ENCODE measurements at regions of chr9 and their contacts with region 1.

Region 1: GRCh38 chr9:111298731-111299598 is 31.1 kb downstream of the OR2K2 start:
- DNase-seq: peak; percentile 37
- ATAC-seq: peak; percentile 87
- H3K4me3 ChIP-seq: no peak overlapping the region
- H3K27ac ChIP-seq: no peak overlapping the region
- H3K4me1 ChIP-seq: no peaks in the 10 kb centered on the region
- H3K27me3 ChIP-seq: no peaks in the 10 kb centered on the region
- CTCF ChIP-seq: peak; percentile 56 to 87 (median 65)
- EP300 ChIP-seq: no peak
- POLR2A ChIP-seq: no peak
- RAD21 ChIP-seq: peak; percentile 99

Region 2: GRCh38 chr9:110427497-110428104 is 871.4 kb before region 1 on chr9:
- CTCF ChIA-PET with region 1: interaction called, 3 read pairs
- POLR2A ChIA-PET with region 1: no interaction called
- RAD21 ChIA-PET with region 1: no interaction called
- SMC1A ChIA-PET with region 1: interaction called, 3 read pairs
- in situ Hi-C with region 1: no loop called
- intact Hi-C with region 1: loop called (anchors 5 kb)
- DNase-seq: no peak
- ATAC-seq: peak; percentile 86
- H3K4me3 ChIP-seq: no peak overlapping the region
- H3K27ac ChIP-seq: no peak overlapping the region
- H3K4me1 ChIP-seq: no peaks in the 10 kb centered on the region
- H3K27me3 ChIP-seq: no peaks in the 10 kb centered on the region
- CTCF ChIP-seq: peak; percentile 76 to 79 (median 77)
- EP300 ChIP-seq: no peak
- POLR2A ChIP-seq: no peak
- RAD21 ChIP-seq: peak; percentile 53

Region 3: DNA sequence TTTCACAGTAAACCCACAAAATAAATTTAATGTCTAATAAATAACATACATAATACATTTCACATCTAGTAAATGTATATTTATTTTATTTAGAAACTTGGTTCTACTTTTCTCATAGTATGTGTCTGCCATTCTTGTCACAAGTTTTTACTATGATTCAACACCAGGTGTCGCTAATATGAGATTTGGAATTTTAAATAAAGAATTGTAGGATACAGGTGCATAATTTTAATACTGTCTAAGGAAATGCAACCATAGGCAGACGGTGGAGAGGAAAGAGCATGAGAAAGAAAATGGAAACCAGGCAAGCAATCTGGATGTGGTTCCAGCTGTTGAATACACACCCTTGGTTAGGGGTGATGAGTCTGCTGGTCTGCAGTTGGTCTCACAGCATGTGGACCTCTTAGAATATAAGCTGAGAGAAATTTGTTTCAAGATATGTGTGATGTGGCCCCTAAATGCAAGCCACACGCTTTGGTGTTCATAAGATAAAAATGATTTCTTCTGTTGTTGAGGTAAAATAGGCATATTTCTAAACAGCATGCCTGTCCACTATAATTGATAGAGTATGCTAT is 846.7 kb before region 1 on chr9:
- CTCF ChIA-PET with region 1: no interaction called
- POLR2A ChIA-PET with region 1: no interaction called
- RAD21 ChIA-PET with region 1: no interaction called
- SMC1A ChIA-PET with region 1: no interaction called
- in situ Hi-C with region 1: loop called (anchors 10 kb)
- intact Hi-C with region 1: loop called (anchors 10 kb)
- DNase-seq: no peak
- ATAC-seq: no peak; the same call in 2 of the 3 replicates
- H3K4me3 ChIP-seq: no peak overlapping the region
- H3K27ac ChIP-seq: no peak overlapping the region
- H3K4me1 ChIP-seq: no peaks in the 10 kb centered on the region
- H3K27me3 ChIP-seq: no peaks in the 10 kb centered on the region
- CTCF ChIP-seq: peak in 2 of 3 experiments; percentile 34 to 47; a peak in 3 of 6 replicates
- EP300 ChIP-seq: no peak
- POLR2A ChIP-seq: no peak
- RAD21 ChIP-seq: peak; percentile 18; the same call in 1 of the 2 replicates

Region 4: GRCh38 chr9:110808599-110808980 is 490.4 kb before region 1 on chr9:
- CTCF ChIA-PET with region 1: interaction called, 5 read pairs
- POLR2A ChIA-PET with region 1: no interaction called
- RAD21 ChIA-PET with region 1: no interaction called
- SMC1A ChIA-PET with region 1: no interaction called
- in situ Hi-C with region 1: no loop called
- intact Hi-C with region 1: loop called (anchors 2 kb)
- DNase-seq: peak; percentile 93
- ATAC-seq: peak; percentile 90
- H3K4me3 ChIP-seq: 0 out of 2 replicates have a peak overlapping the region, but pooled peaks have one; percentile 28
- H3K27ac ChIP-seq: peak overlapping the region; percentile 90
- H3K4me1 ChIP-seq: peaks cover 18% of the 10 kb centered on the region
- H3K27me3 ChIP-seq: no peaks in the 10 kb centered on the region
- CTCF ChIP-seq: no peak
- EP300 ChIP-seq: peak; percentile 97 to 98
- POLR2A ChIP-seq: no peak
- RAD21 ChIP-seq: no peak; the same call in 1 of the 2 replicates

Region 5: GRCh38 chr9:110954822-110955291 is 344.1 kb before region 1 on chr9:
- CTCF ChIA-PET with region 1: no interaction called
- POLR2A ChIA-PET with region 1: no interaction called
- RAD21 ChIA-PET with region 1: no interaction called
- SMC1A ChIA-PET with region 1: interaction called, 3 read pairs
- in situ Hi-C with region 1: no loop called
- intact Hi-C with region 1: loop called (anchors 10 kb)
- DNase-seq: no peak
- ATAC-seq: peak; percentile 54
- H3K4me3 ChIP-seq: no peak overlapping the region
- H3K27ac ChIP-seq: no peak overlapping the region
- H3K4me1 ChIP-seq: peaks cover 8% of the 10 kb centered on the region
- H3K27me3 ChIP-seq: no peaks in the 10 kb centered on the region
- CTCF ChIP-seq: no peak
- EP300 ChIP-seq: peak in 1 of 2 experiments; percentile 61; a peak in 1 of 4 replicates
- POLR2A ChIP-seq: no peak
- RAD21 ChIP-seq: no peak

Region 6: GRCh38 chr9:111287127-111287526 is 11.8 kb before region 1 on chr9:
- CTCF ChIA-PET with region 1: interaction called, 5 read pairs
- POLR2A ChIA-PET with region 1: no interaction called
- RAD21 ChIA-PET with region 1: no interaction called
- SMC1A ChIA-PET with region 1: interaction called, 13 read pairs
- in situ Hi-C with region 1: no loop called
- intact Hi-C with region 1: no loop called
- DNase-seq: no peak
- ATAC-seq: no peak
- H3K4me3 ChIP-seq: no peak overlapping the region
- H3K27ac ChIP-seq: no peak overlapping the region
- H3K4me1 ChIP-seq: no peaks in the 10 kb centered on the region
- H3K27me3 ChIP-seq: no peaks in the 10 kb centered on the region; a peak in 1 of 4 replicates
- CTCF ChIP-seq: no peak
- EP300 ChIP-seq: no peak
- POLR2A ChIP-seq: no peak
- RAD21 ChIP-seq: no peak

Region 7: DNA sequence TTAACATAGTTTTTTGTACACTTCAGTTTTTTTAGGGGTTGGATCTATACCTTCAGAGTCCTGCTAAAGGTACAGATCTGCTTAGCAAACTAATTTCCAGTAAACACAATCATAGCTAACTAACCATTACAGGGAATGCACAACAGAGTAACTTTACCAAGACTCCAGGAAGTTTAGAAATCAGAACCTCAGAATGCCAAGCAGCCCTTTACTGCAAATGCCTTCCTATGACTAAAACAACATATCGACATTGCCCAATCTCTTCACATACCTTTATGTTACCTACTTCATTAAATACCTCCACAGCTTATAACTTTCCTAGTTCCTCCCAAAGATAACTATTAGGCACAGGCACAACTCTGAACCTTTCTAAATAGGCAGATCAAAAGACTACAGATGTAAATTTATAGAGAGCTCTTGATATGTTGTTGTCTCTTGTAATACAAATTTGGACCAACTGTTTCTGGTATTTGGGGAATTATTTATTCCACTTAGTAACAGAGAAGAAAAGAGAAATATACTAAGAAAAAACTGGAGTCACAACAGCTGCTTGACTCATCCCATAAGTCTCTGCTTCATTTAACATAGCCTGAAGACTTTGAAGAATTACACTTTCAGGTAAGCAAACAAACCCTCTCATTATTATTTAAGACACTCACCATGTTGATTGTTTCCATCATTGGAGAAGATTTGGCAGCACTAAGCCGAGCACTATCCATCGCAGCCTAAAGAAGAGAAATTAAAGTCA is 77.0 kb after region 1 on chr9:
- CTCF ChIA-PET with region 1: no interaction called
- POLR2A ChIA-PET with region 1: no interaction called
- RAD21 ChIA-PET with region 1: no interaction called
- SMC1A ChIA-PET with region 1: no interaction called
- in situ Hi-C with region 1: no loop called
- intact Hi-C with region 1: no loop called
- DNase-seq: no peak
- ATAC-seq: no peak
- H3K4me3 ChIP-seq: no peak overlapping the region
- H3K27ac ChIP-seq: no peak overlapping the region
- H3K4me1 ChIP-seq: no peaks in the 10 kb centered on the region
- H3K27me3 ChIP-seq: no peaks in the 10 kb centered on the region
- CTCF ChIP-seq: no peak
- EP300 ChIP-seq: no peak
- POLR2A ChIP-seq: no peak
- RAD21 ChIP-seq: no peak

Measured in GM12878 (cell line).